Caco-2 (cell line): ENCODE measurements at regions of chr1 and their contacts with region 1.

Region 1: GRCh38 chr1:235971571-235972310 is 93.1 kb downstream of the NID1 start:
- DNase-seq: peak; percentile 82 to 88
- H3K4me3 ChIP-seq: peak overlapping the region; percentile 34
- H3K4me3 Mint-ChIP-seq: peak overlapping the region; percentile 66
- H3K27ac Mint-ChIP-seq: peak overlapping the region; percentile 40
- H3K4me1 ChIP-seq: peaks cover 5% of the 10 kb centered on the region; the same call in 1 of the 2 replicates
- H3K4me1 Mint-ChIP-seq: peaks cover 18% of the 10 kb centered on the region
- H3K27me3 ChIP-seq: no peaks in the 10 kb centered on the region
- H3K27me3 Mint-ChIP-seq: no peaks in the 10 kb centered on the region
- CTCF ChIP-seq: peak; percentile 83 to 84

Region 2: DNA sequence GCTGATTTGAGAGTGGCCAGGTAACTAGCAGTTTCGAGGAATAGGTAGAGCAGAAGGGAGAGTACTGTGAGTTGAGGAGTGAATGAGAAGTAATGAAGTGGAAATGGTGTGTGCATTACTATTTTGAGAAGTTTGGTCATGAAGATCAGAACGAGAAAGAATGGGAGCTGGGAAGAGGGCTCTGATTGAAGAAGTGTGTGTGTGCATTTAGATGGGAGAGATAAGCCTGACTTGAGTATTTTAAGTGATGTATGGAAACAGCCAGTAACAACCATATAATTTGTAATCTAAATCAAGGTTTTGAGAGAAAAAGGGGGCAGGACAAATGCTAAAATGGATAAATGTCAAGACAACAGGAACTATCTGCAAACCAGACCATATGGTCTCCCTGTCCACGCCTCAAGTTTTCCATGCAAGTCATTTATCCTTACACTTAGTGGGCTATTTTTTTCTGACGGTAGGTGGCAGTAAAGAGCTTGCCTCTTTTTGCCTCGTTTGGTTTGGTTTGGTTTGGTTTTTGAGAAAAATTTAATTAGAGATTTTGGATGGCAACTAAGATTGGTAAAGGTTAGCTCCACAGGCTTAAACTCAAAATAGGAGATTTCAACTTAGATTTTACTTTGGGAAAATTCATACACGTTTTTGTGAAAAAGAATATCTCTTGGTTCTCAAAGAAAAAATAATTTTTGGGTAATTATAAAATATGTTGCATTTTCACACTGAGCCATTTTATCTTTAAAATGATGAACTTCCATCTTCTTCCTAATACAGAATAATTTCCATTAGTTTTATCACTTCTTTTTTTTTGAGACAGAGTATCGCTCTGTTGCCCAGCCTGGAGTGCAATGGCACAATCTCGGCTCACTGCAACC is 458.0 kb before region 1 on chr1:
- CTCF ChIA-PET with region 1: interaction called, 3 read pairs
- POLR2A ChIA-PET with region 1: no interaction called
- intact Hi-C with region 1: loop called (anchors 2 kb)
- DNase-seq: peak in 1 of 2 experiments; percentile 72
- H3K4me3 ChIP-seq: no peak overlapping the region
- H3K4me3 Mint-ChIP-seq: no peak overlapping the region
- H3K27ac Mint-ChIP-seq: no peak overlapping the region
- H3K4me1 ChIP-seq: no peaks in the 10 kb centered on the region
- H3K4me1 Mint-ChIP-seq: no peaks in the 10 kb centered on the region
- H3K27me3 ChIP-seq: no peaks in the 10 kb centered on the region
- H3K27me3 Mint-ChIP-seq: peaks cover 2% of the 10 kb centered on the region
- CTCF ChIP-seq: peak; percentile 80 to 89

Region 3: DNA sequence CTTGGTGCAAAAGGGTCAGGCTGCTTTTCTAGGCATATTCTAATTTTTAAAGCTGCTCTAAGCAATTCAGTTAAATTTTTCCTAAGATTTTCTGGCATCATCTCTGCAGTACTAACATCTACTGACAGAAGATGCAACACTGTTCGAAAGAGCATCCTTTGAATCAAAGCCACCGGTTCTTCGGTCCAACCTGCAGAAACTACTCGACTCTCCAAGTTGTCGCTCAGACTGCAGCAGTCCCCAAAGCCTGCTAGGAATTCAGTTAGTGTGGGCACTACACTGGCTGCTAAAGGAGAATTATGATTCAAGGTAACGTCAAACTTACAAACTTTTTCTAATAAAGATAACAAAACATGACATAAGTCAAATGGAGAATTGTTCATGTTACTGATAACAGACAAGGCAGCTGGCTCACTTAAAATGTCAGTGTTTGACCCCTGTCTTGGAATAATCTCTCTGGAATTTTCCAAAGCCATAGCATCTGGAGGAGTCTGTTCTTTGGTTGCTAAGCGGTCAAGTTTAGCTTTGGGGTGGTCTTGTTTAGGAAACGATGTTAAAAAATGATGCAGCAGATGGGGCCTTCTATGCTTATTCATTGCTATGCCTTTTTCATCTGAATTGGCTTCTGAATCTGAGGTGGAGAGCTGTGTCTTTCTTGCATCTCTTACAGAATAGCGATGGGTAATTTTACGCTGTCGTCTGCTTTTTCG is 161.9 kb before region 1 on chr1:
- CTCF ChIA-PET with region 1: no interaction called
- POLR2A ChIA-PET with region 1: no interaction called
- intact Hi-C with region 1: loop called (anchors 5 kb)
- DNase-seq: no peak
- H3K4me3 ChIP-seq: no peak overlapping the region
- H3K4me3 Mint-ChIP-seq: no peak overlapping the region
- H3K27ac Mint-ChIP-seq: no peak overlapping the region
- H3K4me1 ChIP-seq: no peaks in the 10 kb centered on the region; the same call in 1 of the 2 replicates
- H3K4me1 Mint-ChIP-seq: no peaks in the 10 kb centered on the region
- H3K27me3 ChIP-seq: no peaks in the 10 kb centered on the region
- H3K27me3 Mint-ChIP-seq: no peaks in the 10 kb centered on the region
- CTCF ChIP-seq: no peak

Region 4: DNA sequence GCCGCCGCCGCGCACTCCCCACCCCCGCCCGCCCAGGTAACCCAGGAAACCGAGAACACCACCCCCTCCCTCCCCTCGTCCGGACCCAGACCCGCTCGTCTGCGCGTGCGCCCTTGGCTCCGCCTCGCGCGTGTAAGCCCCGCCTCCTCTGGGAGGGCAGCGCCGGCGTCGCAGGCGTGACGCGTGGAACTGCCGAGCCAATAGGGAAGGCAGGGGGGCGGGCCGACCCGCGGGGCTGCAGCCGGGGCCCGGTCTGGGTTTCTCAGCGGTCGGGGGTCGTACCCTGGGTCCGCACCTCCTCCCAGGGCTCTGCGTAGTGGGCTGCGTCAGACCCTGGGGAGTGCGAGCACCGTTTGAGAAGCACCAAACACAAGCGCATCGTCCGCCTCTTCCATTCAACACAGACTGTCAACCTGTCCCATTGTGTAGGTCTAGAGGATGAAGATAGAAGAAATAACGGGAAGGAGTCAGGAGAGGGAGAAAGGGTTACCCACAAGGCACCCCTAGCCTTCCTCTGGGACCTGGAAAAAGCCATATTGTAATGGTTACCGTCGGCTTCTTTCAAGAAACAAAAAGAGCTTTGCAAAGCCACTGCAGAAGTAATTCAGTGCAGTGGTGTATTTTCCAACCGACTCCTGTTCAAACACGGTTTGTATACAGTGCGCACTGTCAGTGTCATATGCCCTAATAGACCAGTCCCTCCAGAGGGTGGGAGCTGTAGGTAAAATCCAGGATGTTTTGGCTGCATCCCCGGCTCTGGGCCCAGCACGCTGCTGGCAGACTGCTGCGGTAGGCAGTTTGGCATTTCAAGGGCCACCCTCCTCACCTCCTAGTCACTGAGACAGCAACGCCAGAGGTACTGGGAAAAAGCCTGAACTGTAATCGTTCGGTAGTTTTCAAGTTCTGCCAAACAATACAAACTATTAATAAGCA is 104.6 kb before region 1 on chr1:
- CTCF ChIA-PET with region 1: interaction called, 37 read pairs
- POLR2A ChIA-PET with region 1: no interaction called
- intact Hi-C with region 1: loop called (anchors 1 kb)
- DNase-seq: peak; percentile 93 to 98
- H3K4me3 ChIP-seq: peak overlapping the region; percentile 65
- H3K4me3 Mint-ChIP-seq: peak overlapping the region; percentile 98
- H3K27ac Mint-ChIP-seq: peak overlapping the region; percentile 48
- H3K4me1 ChIP-seq: peaks cover 4% of the 10 kb centered on the region; the same call in 1 of the 2 replicates
- H3K4me1 Mint-ChIP-seq: peaks cover 6% of the 10 kb centered on the region
- H3K27me3 ChIP-seq: no peaks in the 10 kb centered on the region
- H3K27me3 Mint-ChIP-seq: peaks cover 2% of the 10 kb centered on the region
- CTCF ChIP-seq: no peak

Region 5: DNA sequence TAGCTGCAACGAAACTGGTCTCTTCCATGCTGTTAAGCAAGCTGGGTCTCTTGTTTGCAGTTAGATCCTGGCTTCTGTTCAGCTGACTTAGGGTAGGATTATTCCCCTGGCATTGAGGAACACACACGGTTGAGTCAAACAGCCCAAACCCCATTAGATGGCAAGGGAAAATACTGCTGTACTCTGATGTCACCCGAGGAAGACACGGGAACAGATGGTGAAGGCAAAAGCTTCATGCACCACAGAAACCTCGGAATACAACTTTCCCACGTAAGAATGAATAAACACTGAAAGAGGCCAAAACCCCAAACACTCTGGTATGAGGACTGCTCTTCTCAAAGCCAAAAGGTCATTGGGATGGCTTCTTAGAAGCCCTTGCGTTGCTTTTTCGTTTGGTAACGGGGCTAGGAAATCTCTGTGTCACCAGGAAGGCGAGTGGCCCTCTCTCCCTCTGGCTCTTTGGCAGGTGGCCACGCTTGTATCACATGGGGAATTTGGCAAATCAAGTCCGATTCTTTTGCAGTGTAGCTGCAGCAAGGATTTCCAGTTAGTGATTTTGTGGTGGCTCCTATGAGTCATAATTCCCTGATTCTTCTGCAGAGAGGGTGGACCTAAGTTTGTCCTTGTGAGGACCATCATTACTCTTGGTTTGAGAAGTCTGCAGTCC is 88.3 kb before region 1 on chr1:
- CTCF ChIA-PET with region 1: no interaction called
- POLR2A ChIA-PET with region 1: no interaction called
- intact Hi-C with region 1: no loop called
- DNase-seq: no peak
- H3K4me3 ChIP-seq: no peak overlapping the region
- H3K4me3 Mint-ChIP-seq: no peak overlapping the region
- H3K27ac Mint-ChIP-seq: no peak overlapping the region
- H3K4me1 ChIP-seq: peaks cover 13% of the 10 kb centered on the region; the same call in 1 of the 2 replicates
- H3K4me1 Mint-ChIP-seq: peaks cover 12% of the 10 kb centered on the region
- H3K27me3 ChIP-seq: no peaks in the 10 kb centered on the region
- H3K27me3 Mint-ChIP-seq: no peaks in the 10 kb centered on the region
- CTCF ChIP-seq: no peak

Region 6: GRCh38 chr1:235954306-235955283 is 17.1 kb before region 1 on chr1:
- CTCF ChIA-PET with region 1: interaction called, 9 read pairs
- POLR2A ChIA-PET with region 1: no interaction called
- intact Hi-C with region 1: loop called (anchors 2 kb)
- DNase-seq: no peak
- H3K4me3 ChIP-seq: no peak overlapping the region
- H3K4me3 Mint-ChIP-seq: no peak overlapping the region
- H3K27ac Mint-ChIP-seq: no peak overlapping the region
- H3K4me1 ChIP-seq: no peaks in the 10 kb centered on the region
- H3K4me1 Mint-ChIP-seq: peaks cover 8% of the 10 kb centered on the region
- H3K27me3 ChIP-seq: no peaks in the 10 kb centered on the region
- H3K27me3 Mint-ChIP-seq: no peaks in the 10 kb centered on the region
- CTCF ChIP-seq: peak in 1 of 2 experiments; percentile 5

Region 7: DNA sequence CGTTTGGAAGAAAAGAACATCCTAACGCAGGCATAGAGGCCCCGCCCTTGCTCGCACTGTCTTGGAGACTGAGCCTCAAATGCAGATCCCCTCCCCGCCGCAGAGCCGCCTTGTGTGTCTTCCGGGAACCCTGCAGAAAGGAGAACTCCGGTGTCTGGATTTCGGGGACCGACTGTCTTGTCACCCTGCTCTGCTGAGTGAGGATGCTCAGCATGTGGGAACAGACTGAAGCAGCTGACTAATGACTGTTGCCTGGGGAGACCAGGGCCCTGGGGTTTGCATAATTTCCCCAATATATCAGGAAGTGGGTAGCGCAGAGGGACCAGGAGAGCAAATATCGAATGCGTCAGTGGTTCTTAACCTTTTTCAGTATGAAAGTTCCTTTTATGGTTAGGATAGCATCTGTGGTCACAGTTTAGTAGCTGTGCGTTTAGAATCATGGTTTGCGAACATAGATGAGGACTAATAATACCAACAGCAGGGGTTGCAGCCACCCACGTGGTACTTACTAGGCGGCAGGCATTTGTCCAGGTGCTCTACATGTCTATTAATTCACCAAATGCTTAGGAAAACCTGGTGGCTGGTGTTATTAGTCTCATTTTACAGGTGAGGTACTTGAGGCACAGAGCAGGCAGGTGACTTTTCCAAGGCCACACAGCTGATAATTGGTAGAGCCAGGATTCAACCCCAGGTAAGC is 184.9 kb after region 1 on chr1:
- CTCF ChIA-PET with region 1: no interaction called
- POLR2A ChIA-PET with region 1: no interaction called
- intact Hi-C with region 1: no loop called
- DNase-seq: no peak
- H3K4me3 ChIP-seq: no peak overlapping the region
- H3K4me3 Mint-ChIP-seq: no peak overlapping the region
- H3K27ac Mint-ChIP-seq: no peak overlapping the region
- H3K4me1 ChIP-seq: peaks cover 19% of the 10 kb centered on the region
- H3K4me1 Mint-ChIP-seq: peaks cover 20% of the 10 kb centered on the region
- H3K27me3 ChIP-seq: no peaks in the 10 kb centered on the region
- H3K27me3 Mint-ChIP-seq: no peaks in the 10 kb centered on the region
- CTCF ChIP-seq: no peak